GM12878 (cell line): ENCODE measurements at regions of chr9 and their contacts with region 1.

Region 1: GRCh38 chr9:135864447-135865049 is 42.8 kb downstream of the CAMSAP1 start:
- DNase-seq: no peak
- ATAC-seq: peak; percentile 82
- H3K4me3 ChIP-seq: no peak overlapping the region
- H3K27ac ChIP-seq: no peak overlapping the region
- H3K4me1 ChIP-seq: no peaks in the 10 kb centered on the region
- H3K27me3 ChIP-seq: no peaks in the 10 kb centered on the region
- CTCF ChIP-seq: peak; percentile 76 to 86 (median 81)
- EP300 ChIP-seq: no peak
- POLR2A ChIP-seq: no peak
- RAD21 ChIP-seq: peak; percentile 64

Region 2: DNA sequence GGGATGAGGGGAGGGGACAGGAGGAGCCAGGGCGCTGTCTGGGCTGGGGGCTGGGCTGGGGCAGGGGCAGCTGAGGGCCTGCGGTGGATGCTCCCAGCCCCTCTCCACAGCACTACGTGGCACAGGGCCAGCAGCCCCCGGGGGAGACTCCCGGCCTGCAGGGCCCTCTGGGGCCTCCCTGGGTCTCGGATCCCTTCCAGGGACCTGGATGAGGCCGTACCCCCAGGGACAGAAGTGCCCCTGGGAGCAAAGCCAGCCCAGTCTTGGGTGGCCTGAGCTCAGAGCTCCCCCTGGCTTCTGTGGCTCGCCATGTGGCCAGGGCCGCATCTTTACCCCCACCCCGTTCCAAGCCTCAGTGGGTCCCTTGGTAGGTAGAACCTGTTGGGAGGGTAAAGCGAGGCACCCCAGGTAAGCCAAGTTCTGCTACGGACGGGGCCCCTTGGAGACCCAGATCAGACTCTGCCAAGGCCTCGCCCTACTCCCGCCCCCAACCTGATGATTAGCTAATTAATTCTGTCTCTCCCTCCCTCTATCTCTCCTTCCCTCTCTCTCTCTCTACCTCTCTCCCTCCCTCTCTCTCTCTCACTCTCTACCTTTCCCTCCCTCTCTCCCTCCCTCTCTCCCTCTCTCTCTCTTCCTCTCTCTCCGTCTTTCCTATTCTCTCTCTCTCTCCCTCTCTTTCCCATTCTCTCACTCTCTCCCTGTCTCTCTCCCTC is 138.3 kb before region 1 on chr9:
- CTCF ChIA-PET with region 1: no interaction called
- POLR2A ChIA-PET with region 1: no interaction called
- RAD21 ChIA-PET with region 1: no interaction called
- SMC1A ChIA-PET with region 1: no interaction called
- in situ Hi-C with region 1: no loop called
- intact Hi-C with region 1: no loop called
- DNase-seq: no peak
- ATAC-seq: no peak; the same call in 2 of the 3 replicates
- H3K4me3 ChIP-seq: no peak overlapping the region
- H3K27ac ChIP-seq: no peak overlapping the region
- H3K4me1 ChIP-seq: no peaks in the 10 kb centered on the region
- H3K27me3 ChIP-seq: no peaks in the 10 kb centered on the region; a peak in 1 of 4 replicates
- CTCF ChIP-seq: peak in 2 of 3 experiments; percentile 7 to 18; a peak in 1 of 6 replicates
- EP300 ChIP-seq: no peak
- POLR2A ChIP-seq: no peak
- RAD21 ChIP-seq: no peak

Region 3: DNA sequence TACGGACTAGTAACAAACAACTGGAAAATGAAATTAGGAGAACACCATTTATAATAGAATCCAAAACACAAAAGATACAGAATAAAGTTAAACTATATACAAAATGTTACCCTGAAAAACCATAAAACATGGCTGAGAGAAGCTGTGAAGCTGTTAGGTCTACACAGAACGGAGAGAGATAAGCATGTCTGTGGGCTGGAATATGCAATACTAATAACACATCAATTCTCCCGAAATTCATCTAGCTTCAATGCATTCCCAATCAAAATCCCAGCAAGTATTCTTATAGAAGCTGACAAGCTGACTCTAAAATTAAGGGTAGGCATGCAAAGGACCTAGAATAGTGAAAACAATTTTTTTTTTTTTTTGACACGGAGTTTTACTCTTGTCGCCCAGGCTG is 10.3 kb after region 1 on chr9:
- CTCF ChIA-PET with region 1: interaction called, 11 read pairs
- POLR2A ChIA-PET with region 1: no interaction called
- RAD21 ChIA-PET with region 1: no interaction called
- SMC1A ChIA-PET with region 1: no interaction called
- in situ Hi-C with region 1: no loop called
- intact Hi-C with region 1: no loop called
- DNase-seq: no peak
- ATAC-seq: no peak
- H3K4me3 ChIP-seq: no peak overlapping the region
- H3K27ac ChIP-seq: no peak overlapping the region
- H3K4me1 ChIP-seq: no peaks in the 10 kb centered on the region
- H3K27me3 ChIP-seq: no peaks in the 10 kb centered on the region
- CTCF ChIP-seq: no peak
- EP300 ChIP-seq: no peak
- POLR2A ChIP-seq: no peak
- RAD21 ChIP-seq: no peak

Region 4: DNA sequence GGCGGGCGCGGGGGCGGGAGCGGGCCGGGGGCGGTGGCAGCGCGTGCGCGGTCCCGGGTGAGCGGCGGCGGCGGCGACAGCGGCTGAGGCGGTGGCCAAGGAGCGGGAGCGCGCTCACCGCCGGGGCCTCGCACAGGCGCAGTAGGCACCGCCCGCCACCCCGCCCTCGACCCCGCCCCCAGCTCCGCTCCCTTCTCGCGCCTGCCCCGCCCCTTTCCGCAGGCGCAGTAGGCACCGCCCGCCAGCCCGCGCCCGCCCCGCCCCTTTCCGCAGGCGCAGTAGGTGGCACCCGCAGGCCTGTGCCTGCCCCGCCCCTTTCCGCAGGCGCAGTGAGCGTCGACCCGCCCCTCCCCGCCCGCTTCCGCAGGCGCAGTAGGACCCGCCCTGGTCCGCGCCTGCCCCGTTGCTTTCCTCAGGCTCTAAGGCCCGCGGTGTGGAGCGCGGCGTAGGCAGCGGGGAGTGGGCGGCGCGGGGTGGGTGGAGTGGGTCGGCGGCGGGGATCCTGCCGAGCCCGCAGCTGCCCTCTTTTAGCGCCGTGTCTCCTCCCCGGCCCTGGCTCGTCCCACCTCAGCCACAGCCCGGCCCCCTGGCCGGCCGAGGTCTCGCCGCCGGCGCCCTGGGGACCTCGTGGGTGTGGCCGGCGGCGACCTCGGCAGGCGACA is 43.0 kb after region 1 on chr9 and contains the start of gene CAMSAP1:
- CTCF ChIA-PET with region 1: interaction called, 4 read pairs
- POLR2A ChIA-PET with region 1: no interaction called
- RAD21 ChIA-PET with region 1: no interaction called
- SMC1A ChIA-PET with region 1: no interaction called
- in situ Hi-C with region 1: no loop called
- intact Hi-C with region 1: loop called (anchors 5 kb)
- DNase-seq: peak; percentile 51
- ATAC-seq: peak; percentile 94
- H3K4me3 ChIP-seq: peak within 1 kb of the TSS; percentile 84
- H3K27ac ChIP-seq: peak within 1 kb of the TSS; percentile 50
- H3K4me1 ChIP-seq: peaks cover 27% of the 10 kb centered on the region
- H3K27me3 ChIP-seq: no peaks in the 10 kb centered on the region
- CTCF ChIP-seq: no peak
- EP300 ChIP-seq: no peak
- POLR2A ChIP-seq: peak; percentile 81
- RAD21 ChIP-seq: no peak
- polyA plus RNA-seq, gene CAMSAP1: 1.8 to 2.0 TPM